Vagina (tissue), 2 donors: ENCODE measurements at regions of chr12 and their contacts with region 1.

Region 1: DNA sequence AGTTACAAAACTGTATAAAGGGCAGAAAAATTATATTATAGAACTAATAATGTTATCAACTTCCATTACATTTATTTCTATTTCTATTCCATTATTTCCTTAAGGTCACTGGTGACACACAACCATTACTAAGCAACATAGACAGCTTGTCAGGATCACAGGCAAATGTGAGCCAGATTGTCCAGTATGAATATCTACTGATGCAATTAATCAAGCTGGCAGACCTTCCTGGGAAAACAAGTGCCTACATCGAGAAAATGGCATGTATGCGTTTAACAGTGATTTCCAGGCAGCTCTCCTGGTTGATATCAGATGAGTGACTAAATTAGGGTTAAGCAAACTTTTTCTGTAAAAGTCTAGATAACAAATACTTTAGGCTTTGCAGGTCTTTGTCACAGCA is 36.9 kb upstream of the TSPAN8 start:
- DNase-seq: no peak
- H3K4me3 ChIP-seq: no peak overlapping the region
- H3K27ac ChIP-seq: no peak overlapping the region
- H3K4me1 ChIP-seq: no peaks in the 10 kb centered on the region
- H3K27me3 ChIP-seq: no peaks in the 10 kb centered on the region
- CTCF ChIP-seq: no peak
- POLR2A ChIP-seq: no peak

Region 2: GRCh38 chr12:69442894-69443293 is 1751.8 kb before region 1 on chr12:
- intact Hi-C with region 1: loop called (anchors 5 kb)
- DNase-seq: no peak
- H3K4me3 ChIP-seq: no peak overlapping the region
- H3K27ac ChIP-seq: no peak overlapping the region
- H3K4me1 ChIP-seq: no peaks in the 10 kb centered on the region
- H3K27me3 ChIP-seq: no peaks in the 10 kb centered on the region
- CTCF ChIP-seq: no peak
- POLR2A ChIP-seq: no peak

Region 3: GRCh38 chr12:71141378-71141926 is 53.2 kb before region 1 on chr12:
- intact Hi-C with region 1: no loop called
- DNase-seq: no peak
- H3K4me3 ChIP-seq: no peak overlapping the region
- H3K27ac ChIP-seq: no peak overlapping the region
- H3K4me1 ChIP-seq: no peaks in the 10 kb centered on the region
- H3K27me3 ChIP-seq: no peaks in the 10 kb centered on the region
- CTCF ChIP-seq: no peak
- POLR2A ChIP-seq: no peak